Esophagus muscularis mucosa (tissue), 4 donors: ENCODE measurements at regions of chr17 and their contacts with region 1.

Region 1: GRCh38 chr17:3738562-3739295 is 15.0 kb downstream of the HASPIN start:
- DNase-seq: no peak
- H3K4me3 ChIP-seq: peak overlapping the region; percentile 27 to 51 (median 35)
- H3K27ac ChIP-seq: peak overlapping the region; percentile 54 to 80 (median 63)
- H3K4me1 ChIP-seq: peaks cover 9 to 21% (median 19%) of the 10 kb centered on the region in 4 donors
- H3K27me3 ChIP-seq: no peaks in the 10 kb centered on the region
- CTCF ChIP-seq: no peak
- EP300 ChIP-seq: no peak
- POLR2A ChIP-seq: no peak

Region 2: GRCh38 chr17:3104322-3104721 is 634.4 kb before region 1 on chr17 and contains the start of gene OR1D2:
- intact Hi-C with region 1: no loop called
- DNase-seq: no peak
- H3K4me3 ChIP-seq: no peak within 1 kb of the TSS
- H3K27ac ChIP-seq: no peak within 1 kb of the TSS
- H3K4me1 ChIP-seq: no peaks in the 10 kb centered on the region
- H3K27me3 ChIP-seq: peaks cover 0 to 6% (median 0%) of the 10 kb centered on the region in 4 donors
- CTCF ChIP-seq: no peak
- EP300 ChIP-seq: no peak
- POLR2A ChIP-seq: no peak
- total RNA-seq, gene OR1D2: not detected

Region 3: DNA sequence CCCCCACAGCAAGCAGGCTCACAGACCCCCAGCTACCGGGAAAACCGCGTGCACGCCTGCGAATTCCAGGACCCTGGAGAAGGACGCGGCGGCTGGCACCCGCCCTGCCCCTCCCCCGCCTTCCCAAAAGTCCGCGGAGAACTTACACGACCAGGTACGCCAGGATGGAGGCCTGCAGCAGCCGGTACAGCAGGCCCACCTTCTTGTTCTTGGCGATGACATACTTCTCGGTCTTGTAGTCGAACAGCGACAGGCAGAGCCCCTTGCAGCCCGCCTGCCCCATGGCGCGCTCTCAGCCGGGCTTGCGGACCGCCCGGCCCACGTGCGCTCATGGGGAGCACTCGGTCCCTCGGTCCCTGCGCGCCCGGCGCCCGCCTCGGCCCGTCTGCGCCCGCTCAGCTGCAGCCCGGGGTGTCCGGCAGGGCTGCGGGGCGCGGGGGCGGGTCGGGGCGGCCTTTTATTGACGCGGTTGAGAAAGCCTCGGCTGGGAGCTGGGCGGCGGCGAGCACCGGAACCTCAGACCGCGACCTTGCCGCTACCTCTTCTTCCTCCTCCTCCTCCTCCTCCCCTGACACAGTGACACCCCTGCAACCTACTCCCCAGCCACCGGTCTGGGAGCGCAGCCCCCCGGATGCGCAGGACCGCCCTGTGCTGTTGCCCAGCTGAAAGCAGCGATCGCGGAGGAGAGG is 42.9 kb before region 1 on chr17 and contains the start of gene P2RX5:
- intact Hi-C with region 1: no loop called
- DNase-seq: no peak
- H3K4me3 ChIP-seq: peak within 1 kb of the TSS; percentile 51 to 58 (median 55)
- H3K27ac ChIP-seq: no peak within 1 kb of the TSS
- H3K4me1 ChIP-seq: peaks cover 18 to 23% (median 21%) of the 10 kb centered on the region in 4 donors
- H3K27me3 ChIP-seq: peaks cover 0 to 69% (median 31%) of the 10 kb centered on the region in 4 donors
- CTCF ChIP-seq: no peak
- EP300 ChIP-seq: no peak
- POLR2A ChIP-seq: no peak
- total RNA-seq, gene P2RX5: 0.19 to 1.5 (median 1.0) TPM

Region 4: GRCh38 chr17:3802461-3803307 is 64.0 kb after region 1 on chr17:
- intact Hi-C with region 1: loop called (anchors 5 kb)
- DNase-seq: no peak
- H3K4me3 ChIP-seq: no peak overlapping the region
- H3K27ac ChIP-seq: peak overlapping the region; percentile 73 to 85 (median 82)
- H3K4me1 ChIP-seq: peaks cover 5 to 23% (median 22%) of the 10 kb centered on the region in 4 donors
- H3K27me3 ChIP-seq: peaks cover 0 to 5% (median 0%) of the 10 kb centered on the region in 4 donors
- CTCF ChIP-seq: no peak
- EP300 ChIP-seq: peak; percentile 48
- POLR2A ChIP-seq: no peak

Region 5: DNA sequence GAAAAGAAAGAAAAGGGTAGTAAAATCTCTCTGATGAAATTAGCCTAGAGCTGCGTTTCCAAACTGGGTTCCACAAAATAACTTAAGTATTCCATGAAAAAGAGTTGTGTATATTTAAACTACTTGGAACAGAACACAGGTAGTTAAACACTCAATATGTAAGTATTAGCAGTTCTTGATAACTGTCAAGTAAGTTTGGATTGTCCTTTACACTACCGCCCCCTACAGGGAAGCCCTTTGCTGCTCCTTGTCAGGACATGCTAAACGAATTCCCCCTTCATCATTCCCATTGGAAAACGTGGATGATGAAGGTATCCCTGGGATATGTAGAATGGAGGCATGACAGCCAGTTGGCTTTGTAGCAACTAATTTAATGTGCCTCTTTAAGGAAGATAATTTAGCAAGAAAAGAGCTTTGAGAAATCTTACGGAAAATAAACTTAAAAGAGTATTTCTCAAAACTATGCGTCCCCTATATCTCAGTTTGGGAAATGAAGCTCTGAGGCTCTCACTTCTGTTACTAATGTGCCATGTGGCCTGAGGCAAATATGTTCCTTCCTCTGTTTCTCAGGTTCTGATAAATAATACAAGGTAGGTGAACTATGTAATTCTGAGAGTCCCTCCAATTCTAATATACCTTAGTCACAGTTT is 88.5 kb after region 1 on chr17:
- intact Hi-C with region 1: loop called (anchors 5 kb)
- DNase-seq: no peak
- H3K4me3 ChIP-seq: no peak overlapping the region
- H3K27ac ChIP-seq: peak overlapping the region; percentile 69 to 85 (median 78)
- H3K4me1 ChIP-seq: peaks cover 13 to 27% (median 21%) of the 10 kb centered on the region in 4 donors
- H3K27me3 ChIP-seq: no peaks in the 10 kb centered on the region
- CTCF ChIP-seq: peak in 2 of 3 experiments; percentile 28 to 38
- EP300 ChIP-seq: no peak
- POLR2A ChIP-seq: no peak

Region 6: GRCh38 chr17:3843935-3844516 is 105.3 kb after region 1 on chr17:
- intact Hi-C with region 1: loop called (anchors 5 kb)
- DNase-seq: no peak
- H3K4me3 ChIP-seq: no peak overlapping the region
- H3K27ac ChIP-seq: no peak overlapping the region
- H3K4me1 ChIP-seq: peaks cover 23 to 26% (median 24%) of the 10 kb centered on the region in 4 donors
- H3K27me3 ChIP-seq: no peaks in the 10 kb centered on the region
- CTCF ChIP-seq: peak in 2 of 3 experiments; percentile 35 to 47
- EP300 ChIP-seq: no peak
- POLR2A ChIP-seq: no peak